ENCODE measurements at regions of chr11 and their contacts with region 1.

Region 1: DNA sequence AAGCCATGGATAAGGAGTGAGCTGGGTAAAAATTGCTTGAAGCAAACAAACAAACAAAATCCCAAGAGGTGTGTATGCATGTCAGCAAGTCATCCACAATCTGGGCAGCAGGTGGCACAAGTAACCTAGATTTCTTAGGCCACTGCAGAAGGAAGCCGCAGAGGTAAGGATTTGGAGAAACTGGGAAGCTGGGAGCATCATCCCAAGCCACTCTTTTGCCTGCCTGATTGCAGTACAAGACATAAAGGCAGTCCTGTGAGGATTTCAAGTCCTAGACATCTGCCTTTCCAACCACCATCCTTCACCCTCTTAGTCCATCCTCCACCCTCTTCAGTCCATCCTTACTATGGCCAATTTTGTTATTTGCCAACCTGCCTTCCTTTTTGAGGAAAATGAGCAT is 67.2 kb upstream of the BMAL1 start:
- DNase-seq: peak; percentile 63
- H3K4me3 ChIP-seq: no peak overlapping the region
- H3K27ac ChIP-seq: no peak overlapping the region
- H3K4me1 ChIP-seq: peaks cover 33% of the 10 kb centered on the region
- H3K27me3 ChIP-seq: no peaks in the 10 kb centered on the region
- CTCF ChIP-seq: peak; percentile 77 to 79

Region 2: GRCh38 chr11:12888525-12889158 is 321.8 kb before region 1 on chr11:
- CTCF ChIA-PET with region 1: no interaction called
- dilution Hi-C with region 1: no loop called
- in situ Hi-C with region 1: no loop called
- intact Hi-C with region 1: no loop called
- DNase-seq: peak; percentile 69
- H3K4me3 ChIP-seq: no peak overlapping the region
- H3K27ac ChIP-seq: no peak overlapping the region
- H3K4me1 ChIP-seq: peaks cover 16% of the 10 kb centered on the region
- H3K27me3 ChIP-seq: no peaks in the 10 kb centered on the region
- CTCF ChIP-seq: peak; percentile 69 to 77

Region 3: GRCh38 chr11:13040969-13041561 is 169.4 kb before region 1 on chr11:
- CTCF ChIA-PET with region 1: no interaction called
- dilution Hi-C with region 1: no loop called
- in situ Hi-C with region 1: no loop called
- intact Hi-C with region 1: no loop called
- DNase-seq: no peak
- H3K4me3 ChIP-seq: no peak overlapping the region
- H3K27ac ChIP-seq: no peak overlapping the region
- H3K4me1 ChIP-seq: peaks cover 14% of the 10 kb centered on the region
- H3K27me3 ChIP-seq: no peaks in the 10 kb centered on the region
- CTCF ChIP-seq: no peak

Region 4: DNA sequence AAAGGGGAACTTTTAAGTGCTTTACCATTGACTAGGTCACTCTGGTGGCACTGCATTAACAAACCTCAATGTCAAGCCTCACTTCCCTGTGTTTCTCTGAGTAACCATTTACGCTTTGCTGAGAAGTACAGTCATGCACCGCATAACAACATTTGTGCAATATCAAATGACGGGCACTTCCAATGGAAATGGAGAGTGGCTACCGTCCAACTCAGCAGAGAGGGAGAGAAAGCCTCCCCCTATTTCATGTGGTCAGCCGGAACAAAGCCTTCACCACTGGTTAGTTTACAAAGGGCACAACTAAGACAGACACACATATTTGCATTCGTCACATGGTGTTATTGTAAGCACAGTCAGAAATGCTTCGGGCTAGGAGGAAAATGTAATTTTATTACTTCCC is 84.0 kb before region 1 on chr11:
- CTCF ChIA-PET with region 1: no interaction called
- dilution Hi-C with region 1: no loop called
- in situ Hi-C with region 1: no loop called
- intact Hi-C with region 1: no loop called
- DNase-seq: peak; percentile 58
- H3K4me3 ChIP-seq: no peak overlapping the region
- H3K27ac ChIP-seq: no peak overlapping the region
- H3K4me1 ChIP-seq: no peaks in the 10 kb centered on the region
- H3K27me3 ChIP-seq: no peaks in the 10 kb centered on the region
- CTCF ChIP-seq: no peak

Region 5: DNA sequence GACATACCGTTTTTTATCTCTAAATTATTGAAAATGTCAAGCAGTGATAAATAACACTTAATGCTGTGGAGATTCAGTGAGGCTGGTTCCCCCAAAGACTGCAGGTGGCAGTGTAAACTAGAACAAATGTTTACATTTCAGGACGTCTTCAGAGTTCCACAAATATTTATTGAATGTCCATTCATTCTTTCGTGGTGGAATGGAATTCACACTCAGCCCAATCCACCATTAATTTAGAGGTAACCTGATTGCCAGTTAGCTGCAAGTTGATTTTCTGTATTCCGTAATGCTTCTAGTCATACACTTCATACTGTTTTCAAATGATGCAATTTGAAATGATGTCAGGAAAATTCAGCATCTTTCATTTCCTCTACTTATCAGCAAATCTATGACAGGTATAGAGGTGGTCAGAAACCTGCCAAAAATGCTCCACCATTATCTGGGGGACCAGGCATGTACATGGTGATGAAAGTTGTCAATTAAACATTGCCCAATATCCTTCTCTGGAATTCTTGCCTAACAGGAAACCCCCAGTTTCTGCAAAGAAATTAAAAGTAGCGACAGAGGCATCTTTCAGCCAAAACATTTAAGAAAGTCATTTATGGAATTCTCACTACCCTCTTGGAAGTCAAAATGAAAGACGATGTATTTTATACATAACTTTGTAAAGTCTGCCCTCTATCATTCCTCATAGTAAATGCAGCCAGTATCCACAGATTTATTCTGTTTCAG is 27.2 kb before region 1 on chr11:
- CTCF ChIA-PET with region 1: no interaction called
- dilution Hi-C with region 1: no loop called
- in situ Hi-C with region 1: no loop called
- intact Hi-C with region 1: loop called (anchors 2 kb)
- DNase-seq: peak; percentile 77
- H3K4me3 ChIP-seq: peak overlapping the region in 2 of 3 experiments; percentile 4 to 27
- H3K27ac ChIP-seq: peak overlapping the region; percentile 5
- H3K4me1 ChIP-seq: peaks cover 7% of the 10 kb centered on the region
- H3K27me3 ChIP-seq: no peaks in the 10 kb centered on the region
- CTCF ChIP-seq: peak; percentile 56 to 63

Region 6: GRCh38 chr11:13256216-13256615 is 45.8 kb after region 1 on chr11:
- CTCF ChIA-PET with region 1: interaction called, 10 read pairs
- dilution Hi-C with region 1: no loop called
- in situ Hi-C with region 1: no loop called
- intact Hi-C with region 1: no loop called
- DNase-seq: peak; percentile 53
- H3K4me3 ChIP-seq: no peak overlapping the region
- H3K27ac ChIP-seq: no peak overlapping the region
- H3K4me1 ChIP-seq: peaks cover 39% of the 10 kb centered on the region
- H3K27me3 ChIP-seq: no peaks in the 10 kb centered on the region
- CTCF ChIP-seq: no peak

Region 7: DNA sequence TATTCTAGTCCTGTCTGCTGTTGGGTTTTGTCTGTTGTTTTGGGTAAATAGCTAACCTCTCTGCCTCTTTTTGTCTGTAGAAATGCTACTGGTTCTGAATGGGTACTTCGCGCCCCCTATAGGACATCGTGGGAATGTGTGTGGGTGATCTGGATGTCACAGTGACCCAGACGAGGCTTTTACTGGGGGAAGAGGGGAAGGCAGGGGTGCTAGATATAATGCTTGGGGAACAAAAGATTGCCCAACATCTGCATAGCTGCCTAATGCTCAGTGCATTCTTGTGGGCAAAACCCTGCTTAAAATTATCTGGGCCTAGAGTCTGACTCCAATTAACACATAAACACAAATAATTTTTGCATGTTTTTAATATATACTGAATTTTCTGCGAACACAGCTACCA is 124.9 kb after region 1 on chr11:
- CTCF ChIA-PET with region 1: interaction called, 9 read pairs
- dilution Hi-C with region 1: loop called (anchors 5 kb)
- in situ Hi-C with region 1: loop called (anchors 5 kb)
- intact Hi-C with region 1: loop called (anchors 1 kb)
- DNase-seq: peak; percentile 62
- H3K4me3 ChIP-seq: no peak overlapping the region
- H3K27ac ChIP-seq: peak overlapping the region; percentile 83
- H3K4me1 ChIP-seq: peaks cover 76% of the 10 kb centered on the region
- H3K27me3 ChIP-seq: no peaks in the 10 kb centered on the region
- CTCF ChIP-seq: peak; percentile 84 to 86

Region 8: DNA sequence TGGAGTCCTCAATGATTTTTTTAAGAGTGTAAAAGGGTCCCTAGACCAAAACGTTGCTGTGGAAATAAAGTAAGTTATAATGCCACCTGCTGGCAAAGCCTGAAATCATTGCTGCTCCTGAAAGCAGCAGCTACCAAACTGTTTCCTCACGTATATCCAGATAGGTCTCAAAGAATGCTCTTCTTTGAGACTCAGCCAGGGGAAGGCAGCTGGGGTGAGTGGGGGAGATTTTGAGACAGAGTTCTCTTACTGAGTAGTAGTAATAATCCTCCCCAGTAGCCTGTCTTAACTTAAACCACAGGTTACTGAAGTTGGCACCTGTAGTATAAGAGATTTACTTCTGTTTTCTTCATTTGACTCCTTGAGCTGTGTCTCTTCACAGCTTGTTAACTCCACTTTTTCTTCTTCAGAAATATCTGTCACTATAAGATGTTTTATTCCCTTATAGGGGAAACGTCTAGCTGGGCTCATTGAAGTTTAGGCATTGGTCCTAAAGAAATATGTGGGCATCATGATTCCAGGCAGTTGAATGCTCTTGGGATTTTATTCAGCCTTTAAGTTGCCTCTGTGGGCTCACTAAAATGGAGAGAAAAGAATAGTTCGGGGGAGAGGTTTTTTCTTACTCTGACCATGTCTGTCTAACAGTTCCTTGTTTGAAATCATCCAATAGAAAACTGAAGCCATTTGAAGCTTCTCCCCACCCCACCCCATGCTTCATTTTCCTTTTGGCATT is 174.7 kb after region 1 on chr11:
- CTCF ChIA-PET with region 1: no interaction called
- dilution Hi-C with region 1: no loop called
- in situ Hi-C with region 1: no loop called
- intact Hi-C with region 1: loop called (anchors 1 kb)
- DNase-seq: peak; percentile 22
- H3K4me3 ChIP-seq: no peak overlapping the region
- H3K27ac ChIP-seq: no peak overlapping the region
- H3K4me1 ChIP-seq: no peaks in the 10 kb centered on the region
- H3K27me3 ChIP-seq: no peaks in the 10 kb centered on the region
- CTCF ChIP-seq: peak; percentile 67 to 68

Region 9: DNA sequence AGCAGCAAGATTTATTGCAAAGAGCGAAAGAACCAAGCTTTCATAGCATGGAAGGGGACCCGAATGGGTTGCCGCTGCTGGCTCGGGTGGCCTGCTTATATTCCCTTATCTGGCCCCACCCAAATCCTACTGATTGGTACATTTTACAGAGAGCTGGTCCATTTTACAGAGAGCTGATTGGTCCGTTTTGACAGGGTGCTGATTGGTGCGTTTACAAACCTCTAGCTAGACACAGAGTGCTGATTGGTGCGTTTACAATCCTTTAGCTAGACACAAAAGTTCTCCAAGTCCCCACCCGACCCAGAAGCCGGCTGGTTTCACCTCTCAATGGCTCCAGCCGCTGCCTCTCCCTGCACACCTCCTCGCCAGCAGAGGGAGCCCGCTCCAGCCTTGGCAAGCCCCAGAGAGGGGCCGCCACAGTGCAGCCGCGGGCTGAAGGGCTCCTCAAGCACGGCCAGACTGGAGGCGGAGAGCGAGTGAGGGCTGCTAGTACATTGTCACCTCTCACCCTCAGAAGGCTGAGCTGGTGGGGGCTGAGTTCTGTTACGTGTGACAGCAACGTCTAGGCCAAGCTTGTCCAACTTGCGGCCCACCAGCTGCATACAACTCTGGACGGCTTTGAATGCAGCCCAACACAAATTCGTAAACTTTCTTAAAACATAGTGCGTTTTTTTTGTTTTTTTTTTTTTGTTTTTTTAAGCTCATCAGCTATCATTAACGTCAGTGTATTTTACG is 276.7 kb after region 1 on chr11:
- CTCF ChIA-PET with region 1: no interaction called
- dilution Hi-C with region 1: no loop called
- in situ Hi-C with region 1: no loop called
- intact Hi-C with region 1: no loop called
- DNase-seq: no peak
- H3K4me3 ChIP-seq: no peak overlapping the region
- H3K27ac ChIP-seq: no peak overlapping the region
- H3K4me1 ChIP-seq: no peaks in the 10 kb centered on the region
- H3K27me3 ChIP-seq: no peaks in the 10 kb centered on the region
- CTCF ChIP-seq: no peak

Measured in mammary epithelial cell (primary cell).